AG04449 (cell line): ENCODE measurements at regions of chr15 and their contacts with region 1.

Region 1: DNA sequence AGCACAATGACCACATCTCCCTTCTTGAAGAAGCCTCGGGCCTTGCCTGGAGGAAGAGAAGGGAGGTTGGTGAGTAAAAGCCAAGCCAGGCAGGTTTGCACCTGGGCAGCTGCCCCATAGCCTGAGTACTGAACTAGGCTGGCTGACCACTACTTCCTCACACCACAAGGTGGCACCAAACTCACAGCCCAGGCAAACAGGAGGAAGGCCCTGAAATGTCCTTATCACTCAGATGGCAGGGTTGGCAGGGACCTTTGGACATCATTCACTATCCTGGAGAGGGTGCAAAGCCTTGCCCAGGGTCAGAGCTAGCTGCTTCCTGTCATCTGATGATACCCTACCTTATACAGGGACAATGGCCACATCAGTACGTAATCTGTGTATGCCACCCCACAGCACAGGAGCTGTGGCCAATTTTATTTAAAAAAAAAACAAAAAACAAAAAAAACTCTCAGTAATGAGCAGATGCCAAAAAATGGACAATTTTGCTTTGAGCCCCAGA is 2.2 kb upstream of the GRAMD2A start:
- DNase-seq: no peak
- H3K4me3 ChIP-seq: no peak overlapping the region
- CTCF ChIP-seq: peak; percentile 88

Region 2: DNA sequence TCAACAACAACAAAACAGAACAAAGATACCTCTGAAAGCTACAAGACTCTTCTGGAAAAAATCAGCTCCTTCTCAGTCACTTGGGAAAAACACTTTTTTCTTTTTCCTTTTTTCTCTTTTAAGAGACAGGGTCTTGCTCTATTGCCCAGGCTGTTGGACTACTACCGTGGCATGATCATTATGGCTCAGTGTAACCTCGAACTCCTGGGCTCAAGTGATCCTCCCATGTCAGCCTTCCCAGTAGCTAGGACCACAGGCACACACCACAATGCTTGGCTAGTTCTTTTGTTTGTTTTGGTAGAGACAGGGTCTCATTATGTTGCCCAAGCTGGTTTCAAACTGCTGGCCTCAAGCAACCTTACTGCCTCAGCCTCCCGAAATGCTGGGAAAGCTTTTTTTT is 94.7 kb before region 1 on chr15:
- CTCF ChIA-PET with region 1: no interaction called
- POLR2A ChIA-PET with region 1: no interaction called
- DNase-seq: no peak
- H3K4me3 ChIP-seq: no peak overlapping the region
- CTCF ChIP-seq: no peak

Region 3: GRCh38 chr15:72222259-72222832 is 22.6 kb after region 1 on chr15:
- CTCF ChIA-PET with region 1: interaction called, 24 read pairs
- POLR2A ChIA-PET with region 1: interaction called, 13 read pairs
- DNase-seq: no peak
- H3K4me3 ChIP-seq: no peak overlapping the region
- CTCF ChIP-seq: no peak

Region 4: DNA sequence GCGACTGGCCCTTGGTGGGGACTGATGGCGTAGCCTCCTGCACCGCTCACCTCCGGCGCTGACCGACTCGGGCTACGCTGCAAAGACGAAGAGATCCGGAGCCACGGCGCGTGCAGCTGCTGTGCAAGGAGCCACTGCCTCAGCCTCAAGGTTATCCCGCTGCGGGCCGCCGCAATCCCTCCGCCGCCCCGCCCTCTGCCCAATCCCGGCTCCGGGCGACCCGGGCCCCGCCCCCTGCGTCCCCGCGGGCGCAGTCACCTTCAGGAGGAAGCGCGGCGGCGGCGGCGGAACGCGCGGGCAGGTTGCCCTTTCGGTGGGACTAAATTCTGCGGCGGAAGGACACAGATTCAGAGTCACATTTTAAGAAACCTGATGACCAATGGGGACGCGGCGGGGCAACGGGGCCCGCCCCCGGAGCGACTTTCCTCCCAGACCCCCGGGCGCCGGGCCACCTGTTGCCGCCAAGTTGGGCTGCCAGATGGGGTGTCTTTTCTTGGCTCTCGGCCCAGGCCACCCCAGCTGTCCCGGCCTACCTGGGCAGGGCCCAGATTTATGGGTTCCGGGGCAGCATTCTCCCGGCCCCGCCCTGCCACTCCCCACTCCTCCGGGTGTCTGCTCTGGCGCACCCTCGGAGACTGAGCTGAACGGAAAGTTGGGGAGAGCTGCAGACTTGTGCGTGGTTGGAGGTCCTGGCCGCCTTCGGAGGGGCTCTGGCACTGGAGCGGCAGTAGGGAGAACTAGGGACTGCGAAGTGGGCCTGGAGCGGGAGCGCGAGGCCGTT is 31.5 kb after region 1 on chr15 and contains the start of gene PKM:
- CTCF ChIA-PET with region 1: interaction called, 18 read pairs
- POLR2A ChIA-PET with region 1: interaction called, 13 read pairs
- DNase-seq: peak; percentile 88
- H3K4me3 ChIP-seq: peak within 1 kb of the TSS; percentile 95
- CTCF ChIP-seq: no peak

Region 5: DNA sequence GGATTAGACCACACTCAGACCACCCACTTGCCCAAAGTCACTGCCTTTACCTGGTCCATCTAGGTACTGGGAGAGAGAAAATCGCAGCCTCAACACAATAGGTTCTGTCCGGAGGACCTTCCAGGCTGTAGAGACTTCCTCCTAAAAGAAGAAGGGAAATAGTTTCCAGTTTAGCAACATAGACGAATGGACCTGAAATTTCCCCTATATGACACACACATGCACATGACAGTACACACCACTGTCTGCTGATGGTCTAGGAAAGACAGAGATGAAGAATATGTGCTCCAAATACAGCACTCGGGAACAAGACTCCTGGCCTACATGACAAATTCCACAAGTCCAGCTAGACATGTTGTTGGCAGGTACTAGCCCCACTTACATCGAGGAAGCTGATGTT is 65.3 kb after region 1 on chr15:
- CTCF ChIA-PET with region 1: interaction called, 13 read pairs
- POLR2A ChIA-PET with region 1: no interaction called
- DNase-seq: no peak
- H3K4me3 ChIP-seq: no peak overlapping the region
- CTCF ChIP-seq: no peak

Region 6: GRCh38 chr15:72285927-72286516 is 86.3 kb after region 1 on chr15:
- CTCF ChIA-PET with region 1: interaction called, 13 read pairs
- POLR2A ChIA-PET with region 1: no interaction called
- DNase-seq: no peak
- H3K4me3 ChIP-seq: no peak overlapping the region
- CTCF ChIP-seq: peak; percentile 46